ENCODE measurements at regions of chr21 and their contacts with region 1.

Region 1: GRCh38 chr21:18384771-18385170 is 18.8 kb downstream of the TMPRSS15 start:
- DNase-seq: peak; percentile 51
- H3K4me3 Mint-ChIP-seq: no peak overlapping the region
- H3K27ac Mint-ChIP-seq: no peak overlapping the region
- H3K4me1 Mint-ChIP-seq: peaks cover 6% of the 10 kb centered on the region
- H3K27me3 Mint-ChIP-seq: no peaks in the 10 kb centered on the region
- CTCF ChIP-seq: peak; percentile 43

Region 2: DNA sequence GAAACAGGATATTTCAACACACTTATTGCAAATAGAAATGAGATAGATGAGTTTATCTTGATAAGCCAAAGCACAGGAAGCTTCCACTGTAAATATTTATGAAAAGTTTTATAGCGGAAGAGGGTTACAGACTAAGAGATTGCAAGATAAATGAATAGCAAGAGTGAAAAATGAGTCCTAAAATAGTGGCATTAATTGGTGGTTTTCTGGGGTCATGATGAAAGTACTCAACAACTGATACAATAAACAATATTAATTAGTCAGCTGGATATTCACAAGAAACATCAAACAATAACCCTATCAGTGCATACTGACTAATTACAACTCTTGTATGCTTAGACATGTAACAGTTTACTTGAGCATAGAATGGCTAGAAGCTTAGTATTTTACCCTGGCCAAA is 295.0 kb before region 1 on chr21:
- CTCF ChIA-PET with region 1: no interaction called
- POLR2A ChIA-PET with region 1: no interaction called
- intact Hi-C with region 1: no loop called
- DNase-seq: no peak
- H3K4me3 Mint-ChIP-seq: no peak overlapping the region
- H3K27ac Mint-ChIP-seq: no peak overlapping the region
- H3K4me1 Mint-ChIP-seq: no peaks in the 10 kb centered on the region
- H3K27me3 Mint-ChIP-seq: no peaks in the 10 kb centered on the region
- CTCF ChIP-seq: no peak

Region 3: DNA sequence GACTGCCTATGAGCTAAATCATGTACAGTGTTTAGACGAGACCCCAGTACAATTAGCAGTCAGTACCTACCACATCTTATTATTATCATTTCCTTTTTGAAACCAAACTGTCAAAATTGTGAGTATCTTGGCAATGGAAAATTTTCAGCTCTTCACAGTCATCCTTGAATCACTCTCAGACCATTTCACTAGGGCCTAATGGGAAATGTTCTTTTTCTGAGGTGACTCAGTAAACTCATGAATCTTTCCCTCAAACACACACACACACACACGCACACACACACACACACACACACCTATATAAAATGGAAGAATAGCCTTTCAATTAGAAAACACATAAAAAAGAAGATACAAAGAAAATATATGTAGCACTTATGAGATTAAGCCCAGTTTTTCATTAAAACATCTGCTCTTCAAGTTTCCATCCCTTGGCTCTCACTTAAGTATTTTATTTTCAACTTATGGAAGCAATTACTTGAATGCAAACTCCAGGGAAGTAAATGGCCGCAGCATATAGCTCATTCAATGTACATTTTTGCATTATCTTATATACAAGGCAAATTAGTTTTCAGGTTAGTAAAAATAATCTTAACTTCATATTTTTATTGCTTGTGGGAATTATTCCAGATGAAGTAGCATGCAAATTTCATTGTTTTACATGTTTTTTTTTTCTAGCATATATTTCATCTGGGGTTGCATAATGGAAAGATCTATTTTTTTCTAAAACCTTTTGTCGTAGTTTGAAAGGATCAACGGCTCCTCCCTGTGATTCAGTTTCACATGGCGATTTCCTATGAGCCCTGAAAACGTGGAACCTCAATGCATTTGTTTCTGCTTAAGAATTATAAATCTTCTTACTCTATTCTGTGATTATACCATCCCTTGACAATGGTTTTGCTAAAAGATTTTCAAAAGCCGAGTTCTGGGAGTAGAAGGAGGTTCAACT is 65.1 kb after region 1 on chr21:
- CTCF ChIA-PET with region 1: interaction called, 11 read pairs
- POLR2A ChIA-PET with region 1: no interaction called
- intact Hi-C with region 1: no loop called
- DNase-seq: no peak
- H3K4me3 Mint-ChIP-seq: no peak overlapping the region
- H3K27ac Mint-ChIP-seq: no peak overlapping the region
- H3K4me1 Mint-ChIP-seq: peaks cover 16% of the 10 kb centered on the region
- H3K27me3 Mint-ChIP-seq: no peaks in the 10 kb centered on the region
- CTCF ChIP-seq: no peak

Region 4: DNA sequence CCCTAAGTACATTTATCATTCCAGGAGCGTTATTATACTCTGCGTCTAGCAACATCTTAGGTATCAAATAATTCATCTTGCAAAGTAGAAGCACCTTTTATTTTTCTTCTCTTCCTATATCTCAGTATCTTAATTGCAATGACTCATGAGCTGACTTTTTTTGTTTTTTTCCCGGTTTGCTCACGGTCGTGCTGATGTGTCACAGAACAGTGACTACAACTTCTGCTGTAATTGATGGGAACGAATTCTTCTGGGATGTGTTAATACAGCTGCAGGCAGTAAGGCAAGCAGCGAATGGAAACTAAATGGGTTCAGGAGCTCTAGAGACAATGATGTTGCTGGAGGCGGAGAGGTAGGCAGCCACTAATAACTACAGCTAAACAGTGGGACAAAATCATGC is 108.7 kb after region 1 on chr21:
- CTCF ChIA-PET with region 1: interaction called, 6 read pairs
- POLR2A ChIA-PET with region 1: no interaction called
- intact Hi-C with region 1: loop called (anchors 5 kb)
- DNase-seq: peak; percentile 85
- H3K4me3 Mint-ChIP-seq: peak overlapping the region; percentile 17
- H3K27ac Mint-ChIP-seq: peak overlapping the region; percentile 2
- H3K4me1 Mint-ChIP-seq: peaks cover 8% of the 10 kb centered on the region
- H3K27me3 Mint-ChIP-seq: no peaks in the 10 kb centered on the region
- CTCF ChIP-seq: no peak

Region 5: GRCh38 chr21:18617291-18617690 is 232.5 kb after region 1 on chr21:
- CTCF ChIA-PET with region 1: no interaction called
- POLR2A ChIA-PET with region 1: no interaction called
- intact Hi-C with region 1: no loop called
- DNase-seq: no peak
- H3K4me3 Mint-ChIP-seq: no peak overlapping the region
- H3K27ac Mint-ChIP-seq: no peak overlapping the region
- H3K4me1 Mint-ChIP-seq: no peaks in the 10 kb centered on the region
- H3K27me3 Mint-ChIP-seq: peaks cover 12% of the 10 kb centered on the region
- CTCF ChIP-seq: no peak